Ascending aorta (tissue), 2 donors: ENCODE measurements at regions of chr3 and their contacts with region 1.

Region 1: GRCh38 chr3:71069797-71070196 is 513.7 kb downstream of the FOXP1 start:
- DNase-seq: peak in 1 of 2 donors; percentile 87
- H3K4me3 ChIP-seq: peak overlapping the region in 1 of 2 donors; percentile 44
- H3K27ac ChIP-seq: peak overlapping the region; percentile 98 to 99
- H3K4me1 ChIP-seq: peaks cover 6 to 54% of the 10 kb centered on the region in 2 donors
- H3K27me3 ChIP-seq: no peaks in the 10 kb centered on the region
- CTCF ChIP-seq: peak; percentile 26 to 54 (median 51)

Region 2: DNA sequence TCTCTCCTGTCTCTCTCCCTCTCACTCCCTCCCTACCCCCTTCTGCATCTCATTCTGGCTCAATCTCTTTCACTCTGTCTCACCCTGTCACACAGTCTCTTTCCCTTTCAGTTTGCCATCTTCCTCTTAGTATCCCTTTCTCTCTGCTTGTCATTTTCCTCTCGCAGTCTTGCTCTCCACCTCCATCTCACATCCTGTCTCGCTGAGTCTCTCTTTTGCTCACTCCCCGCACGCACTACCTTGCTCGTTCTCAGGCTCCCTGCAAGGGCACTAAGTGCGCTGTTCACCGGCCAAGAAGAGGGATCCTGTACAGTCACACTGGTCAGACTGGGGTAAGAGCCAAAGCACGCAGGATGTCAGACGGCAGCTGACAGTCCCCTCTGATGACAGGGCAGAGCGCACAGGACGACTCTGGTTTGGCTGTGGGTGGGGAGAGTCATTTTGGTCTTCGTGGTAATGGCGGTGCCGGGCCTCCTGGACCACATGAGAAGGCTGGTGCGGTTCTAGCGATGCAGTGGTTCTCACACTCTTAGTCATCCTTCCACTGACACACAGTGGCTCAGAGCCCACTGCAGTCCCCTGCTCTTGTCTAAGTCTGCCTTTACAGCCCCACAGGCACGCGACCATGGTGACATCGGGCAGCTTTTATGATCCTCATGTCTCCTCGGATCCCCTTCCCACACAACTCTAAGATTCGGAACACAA is 156.9 kb after region 1 on chr3:
- intact Hi-C with region 1: loop called (anchors 5 kb)
- DNase-seq: peak; percentile 18 to 74
- H3K4me3 ChIP-seq: peak overlapping the region; percentile 40 to 56
- H3K27ac ChIP-seq: peak overlapping the region; percentile 87 to 88
- H3K4me1 ChIP-seq: peaks cover 0 to 30% of the 10 kb centered on the region in 2 donors
- H3K27me3 ChIP-seq: no peaks in the 10 kb centered on the region
- CTCF ChIP-seq: no peak